Natural killer cell (primary cell): ENCODE measurements at regions of chr3 and their contacts with region 1.

Region 1: DNA sequence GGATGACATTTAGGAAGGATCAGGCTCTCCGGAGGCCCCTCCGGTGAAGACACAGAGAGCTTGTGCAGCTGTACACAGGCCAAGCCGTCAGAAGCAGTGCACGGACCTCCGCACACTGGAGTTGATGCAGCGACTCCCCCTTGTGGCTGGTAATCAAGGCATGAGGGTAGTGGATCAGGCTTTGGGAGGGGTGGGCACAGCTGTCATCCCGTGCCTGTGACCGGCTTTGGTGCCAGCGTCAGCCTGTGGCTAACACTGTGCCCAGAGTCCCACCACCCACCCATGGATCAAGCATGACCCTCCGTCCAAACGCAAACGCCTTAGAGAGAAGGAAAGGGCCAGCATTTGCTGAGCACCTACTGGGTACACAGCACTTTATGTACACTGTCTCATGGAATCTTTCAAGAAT is 8.2 kb upstream of the GRIP2 start:
- DNase-seq: peak in 1 of 2 donors; percentile 59
- ATAC-seq: peak in 1 of 3 donors; percentile 62
- H3K4me3 ChIP-seq: no peak overlapping the region
- H3K4me3 Mint-ChIP-seq: no peak overlapping the region
- H3K27ac ChIP-seq: no peak overlapping the region
- H3K27ac Mint-ChIP-seq: no peak overlapping the region
- H3K4me1 ChIP-seq: no peaks in the 10 kb centered on the region
- H3K4me1 Mint-ChIP-seq: no peaks in the 10 kb centered on the region
- H3K27me3 ChIP-seq: peaks cover 3% of the 10 kb centered on the region
- H3K27me3 Mint-ChIP-seq: peaks cover 32 to 60% of the 10 kb centered on the region in 2 donors
- CTCF ChIP-seq: no peak

Region 2: GRCh38 chr3:14261229-14261628 is 287.1 kb before region 1 on chr3:
- intact Hi-C with region 1: loop called (anchors 1 kb)
- DNase-seq: peak; percentile 76 to 85
- ATAC-seq: peak; percentile 74 to 89 (median 78)
- H3K4me3 ChIP-seq: no peak overlapping the region
- H3K4me3 Mint-ChIP-seq: no peak overlapping the region
- H3K27ac ChIP-seq: no peak overlapping the region
- H3K27ac Mint-ChIP-seq: no peak overlapping the region
- H3K4me1 ChIP-seq: no peaks in the 10 kb centered on the region
- H3K4me1 Mint-ChIP-seq: no peaks in the 10 kb centered on the region
- H3K27me3 ChIP-seq: no peaks in the 10 kb centered on the region
- H3K27me3 Mint-ChIP-seq: peaks cover 0 to 11% of the 10 kb centered on the region in 2 donors
- CTCF ChIP-seq: peak; percentile 99

Region 3: GRCh38 chr3:14577897-14578296 is 29.6 kb after region 1 on chr3:
- intact Hi-C with region 1: no loop called
- DNase-seq: no peak
- ATAC-seq: no peak
- H3K4me3 ChIP-seq: no peak overlapping the region
- H3K4me3 Mint-ChIP-seq: no peak overlapping the region
- H3K27ac ChIP-seq: no peak overlapping the region
- H3K27ac Mint-ChIP-seq: no peak overlapping the region
- H3K4me1 ChIP-seq: no peaks in the 10 kb centered on the region
- H3K4me1 Mint-ChIP-seq: no peaks in the 10 kb centered on the region
- H3K27me3 ChIP-seq: no peaks in the 10 kb centered on the region
- H3K27me3 Mint-ChIP-seq: peaks cover 4 to 47% of the 10 kb centered on the region in 2 donors
- CTCF ChIP-seq: no peak